ENCODE measurements at regions of chr4 and their contacts with region 1.

Region 1: GRCh38 chr4:118740869-118741268 is 55.7 kb downstream of the METTL14 start:
- DNase-seq: no peak
- H3K4me3 Mint-ChIP-seq: no peak overlapping the region
- H3K27ac Mint-ChIP-seq: no peak overlapping the region
- H3K4me1 Mint-ChIP-seq: no peaks in the 10 kb centered on the region
- H3K27me3 Mint-ChIP-seq: no peaks in the 10 kb centered on the region

Region 2: DNA sequence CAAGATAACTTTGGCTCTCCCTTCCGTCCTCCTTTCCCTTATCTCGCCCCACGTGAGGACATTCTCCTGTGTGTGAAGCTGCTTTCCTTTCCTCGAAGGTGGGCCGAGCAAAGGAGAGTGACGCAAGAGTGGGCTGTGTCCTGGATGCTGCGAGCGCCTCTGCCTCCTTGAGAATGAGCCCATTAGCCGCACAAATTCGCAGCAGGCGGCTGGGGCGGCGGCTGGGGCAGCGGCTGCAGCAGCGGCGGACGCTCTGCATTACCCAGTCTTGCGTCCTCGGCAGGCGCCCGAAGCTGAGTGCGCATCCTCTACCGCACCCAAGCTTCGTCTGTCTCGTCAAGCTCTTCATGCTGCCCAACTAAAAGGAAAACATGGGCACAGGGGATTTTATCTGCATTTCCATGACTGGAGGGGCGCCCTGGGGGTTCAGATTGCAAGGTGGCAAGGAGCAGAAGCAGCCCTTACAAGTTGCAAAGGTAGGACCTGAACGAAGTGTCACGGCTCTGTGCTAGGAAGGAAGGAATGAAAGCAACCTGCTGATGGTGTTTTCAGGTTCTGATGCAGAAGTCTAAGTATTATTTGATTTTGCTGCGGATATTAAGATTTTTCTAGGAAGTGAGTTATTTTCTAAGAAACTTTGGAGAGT is 147.9 kb after region 1 on chr4 and contains the start of gene SYNPO2:
- intact Hi-C with region 1: loop called (anchors 1 kb)
- DNase-seq: peak; percentile 21
- H3K4me3 Mint-ChIP-seq: peak within 1 kb of the TSS; percentile 83
- H3K27ac Mint-ChIP-seq: no peak within 1 kb of the TSS
- H3K4me1 Mint-ChIP-seq: peaks cover 21% of the 10 kb centered on the region
- H3K27me3 Mint-ChIP-seq: peaks cover 39% of the 10 kb centered on the region
- total RNA-seq, gene SYNPO2: 0.12 and 0.26 TPM in 2 replicates

Measured in activated T-helper 1 cell treated with anti-CD3 and anti-CD28 coated beads, Interleukin-12 subunit alpha, Interleukin-12 subunit beta, Interleukin-2, Interleukin-4 antibody, amounts not matched to agents 30 ng/mL and 10 ng/mL and 1 ng/mL, durations not matched to agents 14 hours and 24 hours and 36 hours (primary cell).